Tibial artery (tissue), 4 donors: ENCODE measurements at regions of chr4 and their contacts with region 1.

Region 1: DNA sequence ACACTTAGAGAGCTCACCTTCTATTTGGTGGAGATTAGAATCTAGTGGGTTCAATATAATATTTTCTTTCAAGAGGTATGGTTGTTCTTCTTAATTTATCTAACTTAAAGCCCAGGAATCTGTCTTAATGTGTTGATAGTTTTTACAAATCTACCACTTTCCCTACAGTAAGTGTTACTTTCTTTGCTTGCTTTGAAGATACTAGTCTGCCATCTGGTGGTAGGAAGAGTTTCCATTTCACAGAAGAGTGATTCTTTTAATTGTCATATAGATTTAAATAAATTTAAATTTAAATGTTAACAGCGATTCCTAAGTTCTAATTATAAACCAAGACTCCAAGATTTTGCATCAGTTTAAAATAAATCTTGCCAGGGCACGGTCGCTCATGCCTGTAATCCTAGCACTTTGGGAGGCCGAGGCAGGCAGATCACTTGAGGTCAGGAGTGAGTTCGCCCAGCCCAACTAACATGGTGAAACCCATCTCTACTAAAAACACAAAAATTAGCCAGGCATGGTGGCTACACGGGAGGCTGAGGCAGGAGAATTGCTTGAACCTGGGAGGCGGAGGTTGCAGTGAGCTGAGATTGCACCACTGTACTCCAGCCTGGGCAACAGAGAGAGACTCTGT is 43.5 kb downstream of the NUDT9 start:
- DNase-seq: no peak
- H3K4me3 ChIP-seq: no peak overlapping the region
- H3K27ac ChIP-seq: peak overlapping the region in 1 of 2 donors; percentile 26
- H3K4me1 ChIP-seq: peaks cover 0 to 4% (median 0%) of the 10 kb centered on the region in 4 donors
- H3K27me3 ChIP-seq: no peaks in the 10 kb centered on the region
- CTCF ChIP-seq: peak; percentile 64 to 67

Region 2: GRCh38 chr4:87375719-87376291 is 90.0 kb before region 1 on chr4:
- intact Hi-C with region 1: loop called (anchors 5 kb)
- DNase-seq: peak in 1 of 2 donors; percentile 41
- H3K4me3 ChIP-seq: no peak overlapping the region
- H3K27ac ChIP-seq: peak overlapping the region in 1 of 2 donors; percentile 6
- H3K4me1 ChIP-seq: peaks cover 0 to 4% (median 2%) of the 10 kb centered on the region in 4 donors
- H3K27me3 ChIP-seq: no peaks in the 10 kb centered on the region
- CTCF ChIP-seq: peak; percentile 71 to 73

Region 3: DNA sequence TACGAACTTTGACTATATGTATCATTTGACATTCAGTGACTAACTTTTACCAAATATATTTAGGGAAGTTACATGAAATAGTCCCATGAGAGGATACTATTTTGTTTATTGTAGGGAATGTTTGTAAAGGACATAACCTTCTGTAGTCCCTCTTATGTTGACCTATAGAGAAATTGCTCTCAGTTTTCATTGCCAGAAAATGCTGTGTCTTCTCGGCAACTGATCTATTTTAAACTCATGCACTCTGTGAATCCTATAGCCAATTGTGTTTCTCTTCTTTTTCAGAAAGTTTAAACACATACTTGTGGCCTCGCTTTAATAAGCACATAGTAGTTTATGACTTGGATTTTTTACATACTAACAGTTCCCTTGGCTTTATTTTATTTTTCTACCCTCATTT is 222.5 kb after region 1 on chr4:
- intact Hi-C with region 1: no loop called
- DNase-seq: no peak
- H3K4me3 ChIP-seq: no peak overlapping the region
- H3K27ac ChIP-seq: no peak overlapping the region
- H3K4me1 ChIP-seq: no peaks in the 10 kb centered on the region
- H3K27me3 ChIP-seq: no peaks in the 10 kb centered on the region
- CTCF ChIP-seq: no peak